ENCODE measurements at regions of chr19 and their contacts with region 1.

Region 1: GRCh38 chr19:47203254-47203653 is 27.7 kb downstream of the BBC3 start:
- DNase-seq: no peak
- H3K4me3 ChIP-seq: no peak overlapping the region
- H3K27ac ChIP-seq: no peak overlapping the region
- H3K4me1 ChIP-seq: no peaks in the 10 kb centered on the region
- H3K27me3 ChIP-seq: no peaks in the 10 kb centered on the region
- CTCF ChIP-seq: no peak

Region 2: DNA sequence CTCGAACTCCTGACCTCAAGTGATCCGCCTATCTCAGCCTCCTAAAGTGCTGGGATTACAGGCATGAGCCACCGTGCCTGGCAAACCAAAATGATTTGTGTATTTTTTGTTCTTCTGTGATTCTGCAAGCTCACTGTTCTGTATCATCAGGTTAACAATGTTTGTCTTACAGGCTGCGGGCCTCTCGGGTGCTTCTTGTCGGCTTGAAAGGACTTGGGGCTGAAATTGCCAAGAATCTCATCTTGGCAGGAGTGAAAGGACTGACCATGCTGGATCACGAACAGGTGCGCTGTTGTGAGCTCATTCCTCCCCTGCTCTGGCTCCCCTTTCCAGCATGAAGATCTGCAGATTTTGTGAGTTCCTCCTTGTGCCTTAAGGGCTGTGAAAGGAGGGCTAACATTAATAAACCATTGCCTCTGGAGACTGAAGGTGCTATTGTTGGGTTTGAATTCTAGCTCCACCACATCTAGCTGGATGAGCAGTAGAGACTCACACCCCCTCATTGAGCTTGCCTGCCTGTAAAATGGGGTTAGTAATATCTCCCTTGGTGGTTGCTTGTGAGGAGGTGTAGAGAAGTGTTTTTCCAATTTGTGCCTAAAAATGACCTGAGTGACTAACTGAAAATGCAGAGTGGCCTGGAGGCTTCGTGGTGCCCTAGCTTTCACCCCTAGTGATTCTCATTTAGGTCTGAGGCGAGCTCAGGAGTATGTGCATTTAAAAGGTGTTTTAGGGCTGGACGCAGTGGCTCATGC is 59.8 kb before region 1 on chr19:
- CTCF ChIA-PET with region 1: no interaction called
- POLR2A ChIA-PET with region 1: no interaction called
- intact Hi-C with region 1: no loop called
- DNase-seq: no peak
- H3K4me3 ChIP-seq: no peak overlapping the region
- H3K27ac ChIP-seq: peak overlapping the region; percentile 10
- H3K4me1 ChIP-seq: peaks cover 38% of the 10 kb centered on the region
- H3K27me3 ChIP-seq: no peaks in the 10 kb centered on the region
- CTCF ChIP-seq: no peak

Region 3: GRCh38 chr19:47243776-47244547 is 40.7 kb after region 1 on chr19:
- CTCF ChIA-PET with region 1: interaction called, 10 read pairs
- POLR2A ChIA-PET with region 1: no interaction called
- intact Hi-C with region 1: no loop called
- DNase-seq: peak; percentile 86 to 95
- H3K4me3 ChIP-seq: peak overlapping the region; percentile 71
- H3K27ac ChIP-seq: peak overlapping the region; percentile 87
- H3K4me1 ChIP-seq: peaks cover 26% of the 10 kb centered on the region
- H3K27me3 ChIP-seq: no peaks in the 10 kb centered on the region
- CTCF ChIP-seq: peak; percentile 98

Region 4: DNA sequence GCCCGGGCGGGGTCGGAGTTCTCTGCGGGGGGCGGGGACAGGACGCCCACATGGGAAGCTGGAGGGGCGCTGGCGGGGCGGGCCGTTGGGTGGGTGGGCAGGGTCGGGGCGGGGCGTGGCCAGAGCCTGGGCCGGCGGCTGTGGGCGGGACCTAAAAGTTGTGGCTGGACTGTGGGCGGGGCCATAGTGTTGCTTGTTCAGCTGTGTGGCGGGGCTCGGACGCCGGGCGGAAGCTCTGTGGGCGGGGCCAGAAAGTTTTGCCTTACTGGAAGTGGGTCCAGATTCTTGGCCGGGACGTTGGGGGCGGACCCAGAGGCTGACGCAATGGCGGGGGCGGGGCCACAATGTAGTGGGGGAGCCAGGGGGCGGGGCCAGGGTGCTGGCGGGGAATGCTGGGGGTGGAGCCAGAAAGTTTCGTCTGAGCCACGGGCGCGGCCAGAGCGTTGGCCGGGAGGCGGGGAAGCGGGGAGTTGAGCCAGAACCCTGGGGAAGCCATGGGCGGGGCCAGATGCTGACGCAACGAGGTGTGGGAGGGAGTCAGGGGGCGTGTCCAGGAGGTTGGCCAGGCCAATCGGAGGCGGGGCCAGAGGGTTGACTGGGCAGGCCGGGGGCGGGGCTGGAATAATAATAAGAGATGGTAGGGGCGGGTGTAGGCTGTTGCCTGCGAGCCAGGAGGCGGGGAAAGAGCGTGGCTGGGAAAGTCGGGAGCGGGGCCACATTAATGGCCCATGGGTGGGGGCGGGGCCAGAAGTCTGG is 53.6 kb after region 1 on chr19:
- CTCF ChIA-PET with region 1: no interaction called
- POLR2A ChIA-PET with region 1: no interaction called
- intact Hi-C with region 1: no loop called
- DNase-seq: peak; percentile 95 to 100
- H3K4me3 ChIP-seq: peak overlapping the region; percentile 68; the same call in 1 of the 2 replicates
- H3K27ac ChIP-seq: peak overlapping the region; percentile 80
- H3K4me1 ChIP-seq: peaks cover 43% of the 10 kb centered on the region
- H3K27me3 ChIP-seq: no peaks in the 10 kb centered on the region
- CTCF ChIP-seq: no peak

Region 5: GRCh38 chr19:47340477-47341208 is 137.4 kb after region 1 on chr19:
- CTCF ChIA-PET with region 1: no interaction called
- POLR2A ChIA-PET with region 1: no interaction called
- intact Hi-C with region 1: no loop called
- DNase-seq: no peak
- H3K4me3 ChIP-seq: no peak overlapping the region
- H3K27ac ChIP-seq: no peak overlapping the region
- H3K4me1 ChIP-seq: no peaks in the 10 kb centered on the region
- H3K27me3 ChIP-seq: no peaks in the 10 kb centered on the region
- CTCF ChIP-seq: no peak